Ascending aorta (tissue), 2 donors: ENCODE measurements at regions of chr2 and their contacts with region 1.

Region 1: DNA sequence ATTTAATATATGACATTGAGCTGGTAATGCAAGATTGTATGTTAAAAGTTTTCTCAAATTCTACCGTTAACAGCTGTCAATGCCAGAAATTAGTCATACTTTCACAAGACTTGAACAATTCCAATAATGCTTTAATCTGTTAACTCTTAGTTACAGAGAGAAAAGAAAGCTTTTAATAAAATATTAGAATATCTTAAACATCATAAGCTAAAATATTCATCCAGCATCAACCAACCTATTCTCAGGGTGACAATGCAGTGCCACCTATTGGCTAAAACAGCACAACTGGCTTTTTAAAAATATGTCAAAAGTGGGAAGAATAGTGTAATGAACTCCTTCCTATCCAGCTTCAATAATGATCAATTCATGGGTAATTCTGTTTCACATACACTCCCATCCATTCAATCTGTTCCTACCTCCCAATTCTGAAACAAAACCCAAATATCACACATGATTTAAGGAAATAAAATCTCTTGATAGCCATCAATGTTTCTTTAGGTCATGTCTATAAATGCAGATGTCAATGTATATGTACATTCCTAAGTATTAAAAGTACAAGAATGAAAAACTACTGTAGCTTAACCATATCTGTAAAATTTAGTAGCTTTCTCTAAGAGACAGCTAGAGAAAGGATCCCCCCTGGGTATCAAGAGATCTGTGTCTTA is 79.8 kb upstream of the CCDC141 start:
- DNase-seq: no peak
- H3K4me3 ChIP-seq: no peak overlapping the region
- H3K27ac ChIP-seq: no peak overlapping the region
- H3K4me1 ChIP-seq: no peaks in the 10 kb centered on the region
- H3K27me3 ChIP-seq: no peaks in the 10 kb centered on the region
- CTCF ChIP-seq: peak in 2 of 3 experiments; percentile 21 to 54

Region 2: DNA sequence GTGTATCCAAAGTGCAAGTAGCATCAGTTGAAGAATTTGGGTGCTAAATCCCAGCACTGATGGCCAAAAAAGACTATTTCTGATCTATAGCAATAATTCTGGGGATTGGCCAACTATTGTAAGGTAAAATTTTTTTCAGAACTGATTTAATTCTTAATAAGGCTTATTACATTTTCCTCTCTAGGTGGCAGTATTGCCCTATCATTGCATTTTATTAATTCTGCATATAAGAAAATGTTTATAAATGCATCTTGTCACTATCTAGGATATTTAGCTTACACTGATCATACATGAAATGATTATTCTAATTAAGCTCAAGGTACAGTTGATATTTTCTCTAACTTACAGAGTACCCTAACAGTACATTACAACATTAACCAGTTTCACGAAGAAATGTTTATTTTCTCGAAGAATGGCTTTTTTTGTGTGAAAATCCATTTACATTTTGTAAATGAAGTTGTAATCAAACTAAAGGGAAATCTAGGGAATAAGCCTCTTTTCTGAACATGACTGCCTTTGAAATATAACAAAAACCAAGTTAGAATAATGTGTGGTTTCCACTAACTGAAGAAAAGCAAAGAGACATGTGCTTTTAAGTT is 333.5 kb before region 1 on chr2:
- intact Hi-C with region 1: loop called (anchors 10 kb)
- DNase-seq: no peak
- H3K4me3 ChIP-seq: no peak overlapping the region
- H3K27ac ChIP-seq: no peak overlapping the region
- H3K4me1 ChIP-seq: no peaks in the 10 kb centered on the region
- H3K27me3 ChIP-seq: no peaks in the 10 kb centered on the region
- CTCF ChIP-seq: peak; percentile 45 to 76 (median 64)

Region 3: DNA sequence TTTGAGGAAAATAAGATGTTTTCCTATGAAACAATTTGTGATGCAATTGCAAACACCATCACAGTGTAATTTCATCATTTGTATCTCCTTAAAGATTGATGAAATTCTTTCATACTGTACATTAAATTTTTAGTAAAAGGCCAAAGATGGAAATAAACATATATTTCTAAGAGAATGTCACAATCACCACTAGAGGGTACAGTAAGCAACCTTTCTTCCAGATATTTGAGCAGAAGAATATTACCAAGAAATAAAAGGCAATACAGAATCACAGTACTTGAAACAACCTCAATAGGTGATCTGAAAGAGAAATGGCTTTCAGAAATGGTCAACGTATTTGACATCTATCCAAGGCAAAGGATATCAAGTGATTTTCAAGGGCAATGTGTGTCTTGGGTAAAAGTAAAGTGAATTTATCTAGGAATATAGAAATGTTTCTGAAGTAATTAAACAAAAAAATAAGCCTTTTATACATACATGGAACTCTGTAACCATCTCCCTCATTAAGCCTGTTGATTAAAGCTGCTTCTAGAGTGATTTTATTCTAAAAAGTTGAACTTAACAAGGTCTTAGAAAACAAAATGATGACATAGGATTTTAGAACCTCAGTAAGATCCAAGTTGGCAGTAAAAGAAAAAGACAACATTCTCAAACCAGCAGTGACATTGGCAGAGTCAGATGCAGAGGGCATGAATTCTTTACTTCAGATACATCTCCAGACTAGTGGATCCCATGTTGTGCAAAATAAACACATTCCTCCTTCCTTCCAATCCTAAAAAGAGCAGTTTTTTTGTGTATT is 225.2 kb after region 1 on chr2:
- intact Hi-C with region 1: no loop called
- DNase-seq: no peak
- H3K4me3 ChIP-seq: no peak overlapping the region
- H3K27ac ChIP-seq: no peak overlapping the region
- H3K4me1 ChIP-seq: peaks cover 0 to 3% of the 10 kb centered on the region in 2 donors
- H3K27me3 ChIP-seq: no peaks in the 10 kb centered on the region
- CTCF ChIP-seq: peak in 1 of 3 experiments; percentile 31